ENCODE measurements at regions of chr6 and their contacts with region 1.

Region 1: GRCh38 chr6:28141500-28142329 is at the start of gene ZKSCAN8:
- DNase-seq: peak; percentile 81 to 93
- ATAC-seq: peak; percentile 96
- H3K4me3 ChIP-seq: peak within 1 kb of the TSS; percentile 98
- H3K27ac ChIP-seq: peak within 1 kb of the TSS; percentile 85 to 94
- H3K4me1 ChIP-seq: peaks cover 13% of the 10 kb centered on the region
- CTCF ChIP-seq: no peak
- EP300 ChIP-seq: no peak
- POLR2A ChIP-seq: peak; percentile 54
- RAD21 ChIP-seq: no peak
- polyA plus RNA-seq, gene ZKSCAN8: 8.9 and 16.2 TPM in 2 replicates

Region 2: DNA sequence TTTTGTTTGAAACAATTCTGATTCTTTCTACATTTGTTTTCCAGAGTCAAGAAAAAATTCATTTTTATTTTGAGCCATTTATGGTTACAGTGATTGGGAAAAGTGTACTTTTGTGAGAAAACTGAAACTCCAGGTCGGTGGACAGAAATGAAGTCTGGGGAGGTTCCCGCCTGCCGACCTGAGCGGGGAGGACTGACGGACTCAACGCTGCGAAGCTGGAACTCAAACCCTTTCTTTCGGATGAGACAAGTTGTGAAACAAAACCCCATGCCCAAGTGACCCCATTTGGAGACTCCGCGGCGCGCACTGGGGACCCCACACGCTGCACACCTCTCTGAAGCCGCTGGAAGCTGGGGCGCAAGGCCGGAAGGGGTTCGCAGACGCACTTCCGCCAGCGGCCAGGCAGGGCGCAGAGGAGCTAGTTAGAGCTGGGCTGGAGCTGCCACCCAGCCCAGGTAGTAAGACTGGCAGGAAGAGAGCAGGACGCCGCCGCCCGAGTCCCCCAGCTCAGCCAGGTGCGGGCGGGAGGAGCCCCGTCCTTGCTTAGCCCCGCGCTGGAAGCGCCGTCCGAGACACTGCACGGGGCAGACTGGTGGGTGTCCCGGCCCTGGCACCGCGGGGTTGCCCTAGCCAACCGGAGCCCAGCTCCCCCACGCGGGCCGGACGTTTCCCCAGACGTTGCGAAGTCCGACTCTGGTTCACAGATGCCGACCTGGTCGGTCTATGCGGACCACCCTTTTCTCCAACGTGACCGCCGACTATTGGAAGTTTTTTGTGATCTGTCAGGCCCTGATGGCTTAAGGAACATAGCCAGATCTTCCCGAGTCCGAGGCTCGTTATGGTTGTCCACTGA is 37.1 kb before region 1 on chr6:
- CTCF ChIA-PET with region 1: interaction called, 3 read pairs
- POLR2A ChIA-PET with region 1: interaction called, 12 read pairs
- DNase-seq: peak; percentile 76 to 84
- ATAC-seq: peak; percentile 100
- H3K4me3 ChIP-seq: peak overlapping the region; percentile 64
- H3K27ac ChIP-seq: peak overlapping the region; percentile 85 to 95
- H3K4me1 ChIP-seq: 0 out of 3 replicates have a peak, but pooled peaks cover 3% of the 10 kb centered on the region
- CTCF ChIP-seq: no peak
- EP300 ChIP-seq: no peak
- POLR2A ChIP-seq: peak; percentile 81
- RAD21 ChIP-seq: 0 out of 5 replicates have a peak, but pooled peaks have one; percentile 10 to 18

Region 3: GRCh38 chr6:28124102-28124970 is 17.4 kb before region 1 on chr6 and contains the start of gene ZSCAN16:
- CTCF ChIA-PET with region 1: interaction called, 3 read pairs
- POLR2A ChIA-PET with region 1: interaction called, 19 read pairs
- DNase-seq: peak; percentile 67 to 86
- ATAC-seq: peak; percentile 99 to 100
- H3K4me3 ChIP-seq: peak within 1 kb of the TSS; percentile 55
- H3K27ac ChIP-seq: peak within 1 kb of the TSS; percentile 72 to 90
- H3K4me1 ChIP-seq: peaks cover 8% of the 10 kb centered on the region; the same call in 1 of the 3 replicates
- CTCF ChIP-seq: no peak
- EP300 ChIP-seq: no peak
- POLR2A ChIP-seq: 0 out of 2 replicates have a peak, but pooled peaks have one; percentile 41
- RAD21 ChIP-seq: no peak
- polyA plus RNA-seq, gene ZSCAN16: 5.5 and 6.0 TPM in 2 replicates

Region 4: GRCh38 chr6:28425944-28426541 is 284.3 kb after region 1 on chr6:
- CTCF ChIA-PET with region 1: no interaction called
- POLR2A ChIA-PET with region 1: no interaction called
- DNase-seq: no peak
- ATAC-seq: no peak
- H3K4me3 ChIP-seq: no peak overlapping the region
- H3K27ac ChIP-seq: no peak overlapping the region
- H3K4me1 ChIP-seq: no peaks in the 10 kb centered on the region
- CTCF ChIP-seq: no peak
- EP300 ChIP-seq: no peak
- POLR2A ChIP-seq: no peak
- RAD21 ChIP-seq: no peak

Measured in A549 (cell line).